Caco-2 (cell line): ENCODE measurements at regions of chr1 and their contacts with region 1.

Region 1: GRCh38 chr1:228734881-228735801 is at the start of gene RHOU:
- DNase-seq: peak; percentile 62 to 87
- H3K4me3 ChIP-seq: peak within 1 kb of the TSS; percentile 65
- H3K4me3 Mint-ChIP-seq: peak within 1 kb of the TSS; percentile 89
- H3K27ac Mint-ChIP-seq: peak within 1 kb of the TSS; percentile 25
- H3K4me1 ChIP-seq: peaks cover 9% of the 10 kb centered on the region
- H3K4me1 Mint-ChIP-seq: peaks cover 6% of the 10 kb centered on the region
- H3K27me3 ChIP-seq: no peaks in the 10 kb centered on the region
- H3K27me3 Mint-ChIP-seq: no peaks in the 10 kb centered on the region
- CTCF ChIP-seq: peak in 1 of 2 experiments; percentile 73
- total RNA-seq, gene RHOU: 17.4 and 18.5 TPM in 2 replicates

Region 2: DNA sequence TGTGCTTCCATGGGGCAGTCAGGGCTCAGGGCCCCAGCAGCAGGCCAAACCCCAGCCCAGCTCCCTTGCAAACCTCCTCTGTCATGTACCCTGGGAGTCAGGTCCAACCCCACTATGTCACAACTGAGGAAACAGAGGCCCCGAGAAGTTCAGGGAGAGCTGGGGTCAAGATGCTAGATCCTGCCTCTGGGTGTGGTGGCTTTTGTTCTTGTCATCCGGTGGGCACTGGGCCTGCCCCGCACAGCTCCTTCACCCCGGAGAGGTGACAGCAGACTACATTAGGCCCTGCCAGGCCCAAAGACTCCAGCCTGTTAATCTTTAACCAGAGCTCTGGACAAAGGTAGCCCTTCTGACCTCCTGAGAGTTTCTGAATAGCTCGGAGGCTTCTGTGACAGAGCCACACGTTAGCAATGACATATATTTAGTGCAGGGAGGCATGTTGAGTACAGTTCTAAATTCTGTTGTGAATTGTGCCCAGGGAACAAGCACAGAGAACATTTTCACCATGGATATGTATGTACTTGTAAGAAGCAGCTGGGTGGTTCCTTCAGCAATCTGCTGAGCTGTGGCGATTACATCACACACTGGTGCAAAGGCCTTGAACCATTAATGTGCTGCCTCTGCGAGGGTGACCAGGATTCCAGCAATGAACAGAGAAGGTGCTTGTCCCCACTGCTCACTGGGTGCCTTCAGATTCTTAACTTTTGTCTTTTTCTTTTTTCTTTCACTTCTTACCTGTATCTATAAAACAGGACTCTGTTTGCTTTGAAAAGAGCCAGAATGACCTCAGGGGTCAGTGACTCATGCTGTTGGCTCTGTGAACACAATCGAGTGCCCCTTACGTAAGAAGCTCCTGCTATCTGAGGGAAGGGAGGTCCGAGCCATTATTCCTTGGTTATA is 102.9 kb after region 1 on chr1:
- CTCF ChIA-PET with region 1: interaction called, 15 read pairs
- POLR2A ChIA-PET with region 1: interaction called, 6 read pairs
- intact Hi-C with region 1: loop called (anchors 1 kb)
- DNase-seq: peak; percentile 87 to 92
- H3K4me3 ChIP-seq: peak overlapping the region; percentile 5
- H3K4me3 Mint-ChIP-seq: peak overlapping the region; percentile 63
- H3K27ac Mint-ChIP-seq: peak overlapping the region; percentile 93
- H3K4me1 ChIP-seq: peaks cover 62% of the 10 kb centered on the region
- H3K4me1 Mint-ChIP-seq: peaks cover 57% of the 10 kb centered on the region
- H3K27me3 ChIP-seq: no peaks in the 10 kb centered on the region
- H3K27me3 Mint-ChIP-seq: no peaks in the 10 kb centered on the region
- CTCF ChIP-seq: no peak

Region 3: DNA sequence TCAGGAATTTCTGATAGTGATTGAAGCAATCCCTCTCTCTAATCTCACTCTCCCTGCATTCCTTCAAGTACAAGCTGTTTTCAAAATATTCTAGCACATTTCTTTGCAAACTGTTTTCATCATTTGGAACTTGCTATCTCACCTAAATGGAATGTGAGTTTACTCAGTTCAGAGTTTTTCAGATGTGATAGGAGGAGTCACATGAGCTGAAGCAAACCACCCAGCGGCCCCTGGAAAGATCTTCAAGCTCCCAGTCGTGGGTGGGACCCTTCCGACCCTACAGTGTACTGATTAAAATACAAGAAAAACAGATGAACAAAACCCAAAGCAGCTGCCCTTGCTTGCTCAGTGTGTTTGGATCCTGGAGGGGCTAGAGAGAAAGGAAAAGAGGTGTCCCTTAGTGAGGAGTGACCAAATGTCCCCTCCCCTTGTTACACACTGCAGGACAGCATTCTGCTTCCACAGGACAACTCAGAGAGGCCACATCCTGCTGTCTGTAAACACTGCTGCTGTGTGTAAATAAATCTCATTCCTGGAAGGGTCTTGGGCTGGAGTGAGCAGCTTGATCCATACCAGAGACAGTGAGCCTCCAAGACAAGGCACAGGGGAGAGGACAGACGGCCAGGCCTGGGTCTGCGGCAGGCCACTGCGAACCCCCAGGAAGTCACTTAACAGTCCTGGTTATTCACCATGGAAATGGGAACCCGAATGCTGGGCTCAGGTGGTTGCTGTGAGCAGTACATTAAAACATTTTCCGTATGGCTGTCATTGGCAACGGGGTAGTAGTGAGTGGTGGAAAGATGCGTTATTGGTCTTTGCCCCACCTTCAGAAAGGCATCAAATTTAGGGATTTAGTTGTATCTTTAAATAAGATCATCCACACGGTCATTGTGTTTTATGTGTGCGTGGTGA is 229.3 kb after region 1 on chr1:
- CTCF ChIA-PET with region 1: no interaction called
- POLR2A ChIA-PET with region 1: no interaction called
- intact Hi-C with region 1: loop called (anchors 1 kb)
- DNase-seq: peak; percentile 69 to 71
- H3K4me3 ChIP-seq: no peak overlapping the region
- H3K4me3 Mint-ChIP-seq: peak overlapping the region; percentile 67
- H3K27ac Mint-ChIP-seq: peak overlapping the region; percentile 99
- H3K4me1 ChIP-seq: peaks cover 25% of the 10 kb centered on the region
- H3K4me1 Mint-ChIP-seq: peaks cover 17% of the 10 kb centered on the region
- H3K27me3 ChIP-seq: no peaks in the 10 kb centered on the region
- H3K27me3 Mint-ChIP-seq: no peaks in the 10 kb centered on the region
- CTCF ChIP-seq: no peak

Region 4: GRCh38 chr1:229156872-229157271 is 421.7 kb after region 1 on chr1:
- CTCF ChIA-PET with region 1: interaction called, 7 read pairs
- POLR2A ChIA-PET with region 1: no interaction called
- intact Hi-C with region 1: loop called (anchors 1 kb)
- DNase-seq: peak; percentile 42 to 49
- H3K4me3 ChIP-seq: no peak overlapping the region
- H3K4me3 Mint-ChIP-seq: no peak overlapping the region
- H3K27ac Mint-ChIP-seq: no peak overlapping the region
- H3K4me1 ChIP-seq: no peaks in the 10 kb centered on the region
- H3K4me1 Mint-ChIP-seq: no peaks in the 10 kb centered on the region
- H3K27me3 ChIP-seq: no peaks in the 10 kb centered on the region
- H3K27me3 Mint-ChIP-seq: no peaks in the 10 kb centered on the region
- CTCF ChIP-seq: peak; percentile 67

Region 5: GRCh38 chr1:229258031-229258756 is 523.1 kb after region 1 on chr1:
- CTCF ChIA-PET with region 1: interaction called, 3 read pairs
- POLR2A ChIA-PET with region 1: no interaction called
- intact Hi-C with region 1: loop called (anchors 1 kb)
- DNase-seq: peak; percentile 62 to 77
- H3K4me3 ChIP-seq: no peak overlapping the region
- H3K4me3 Mint-ChIP-seq: no peak overlapping the region
- H3K27ac Mint-ChIP-seq: peak overlapping the region; percentile 46
- H3K4me1 ChIP-seq: peaks cover 5% of the 10 kb centered on the region; the same call in 1 of the 2 replicates
- H3K4me1 Mint-ChIP-seq: peaks cover 3% of the 10 kb centered on the region
- H3K27me3 ChIP-seq: no peaks in the 10 kb centered on the region
- H3K27me3 Mint-ChIP-seq: no peaks in the 10 kb centered on the region
- CTCF ChIP-seq: peak; percentile 70 to 72